Dorsolateral prefrontal cortex (tissue), 120 donors: ENCODE measurements at regions of chr3 and their contacts with region 1.

Region 1: GRCh38 chr3:112814266-112814665 is 32.4 kb downstream of the CD200R1L start:
- DNase-seq: no peak
- H3K4me3 ChIP-seq: no peak overlapping the region
- H3K27ac ChIP-seq: no peak overlapping the region
- H3K27me3 ChIP-seq: peaks cover 0 to 6% (median 0%) of the 10 kb centered on the region in 45 donors
- CTCF ChIP-seq: peak in 43 of 56 donors; percentile 13 to 64 (median 32)

Region 2: DNA sequence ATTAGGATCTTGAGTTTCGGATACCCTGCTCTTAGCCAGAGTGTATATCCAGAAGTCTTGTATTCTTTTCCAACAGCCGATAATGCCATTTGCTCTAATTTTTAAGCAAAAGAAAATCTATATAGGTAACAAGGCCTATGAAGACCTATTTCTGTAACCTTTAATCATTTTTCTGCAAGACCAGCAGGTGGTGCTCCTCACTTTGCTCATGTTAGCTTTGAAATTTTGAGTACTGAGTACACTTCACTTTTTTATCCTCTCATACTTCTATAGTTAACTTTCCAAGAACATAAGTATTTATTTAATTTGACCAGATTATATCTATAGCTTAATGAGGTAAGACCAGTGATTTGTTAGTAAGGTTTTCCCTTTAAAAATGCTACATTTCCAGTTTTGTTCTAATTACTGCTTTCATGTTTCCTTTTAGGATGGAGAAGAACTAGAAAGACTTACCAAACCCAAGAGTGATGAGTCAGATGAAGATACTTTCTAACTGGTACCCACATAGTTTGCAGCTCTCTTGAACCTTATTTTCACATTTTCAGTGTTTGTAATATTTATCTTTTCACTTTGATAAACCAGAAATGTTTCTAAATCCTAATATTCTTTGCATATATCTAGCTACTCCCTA is 231.9 kb before region 1 on chr3:
- intact Hi-C with region 1: loop called in 1 of 2 experiments (anchors 5 kb)
- DNase-seq: no peak
- H3K4me3 ChIP-seq: no peak overlapping the region
- H3K27ac ChIP-seq: no peak overlapping the region
- H3K27me3 ChIP-seq: no peaks in the 10 kb centered on the region
- CTCF ChIP-seq: peak; percentile 20 to 75 (median 57)

Region 3: GRCh38 chr3:112642912-112643506 is 171.3 kb before region 1 on chr3:
- intact Hi-C with region 1: loop called in 1 of 2 experiments (anchors 10 kb)
- DNase-seq: peak; percentile 37 to 83 (median 78)
- H3K4me3 ChIP-seq: peak overlapping the region in 52 of 59 donors; percentile 3 to 57 (median 38)
- H3K27ac ChIP-seq: no peak overlapping the region
- H3K27me3 ChIP-seq: peaks cover 0 to 24% (median 0%) of the 10 kb centered on the region in 45 donors
- CTCF ChIP-seq: peak; percentile 30 to 88 (median 72)

Region 4: DNA sequence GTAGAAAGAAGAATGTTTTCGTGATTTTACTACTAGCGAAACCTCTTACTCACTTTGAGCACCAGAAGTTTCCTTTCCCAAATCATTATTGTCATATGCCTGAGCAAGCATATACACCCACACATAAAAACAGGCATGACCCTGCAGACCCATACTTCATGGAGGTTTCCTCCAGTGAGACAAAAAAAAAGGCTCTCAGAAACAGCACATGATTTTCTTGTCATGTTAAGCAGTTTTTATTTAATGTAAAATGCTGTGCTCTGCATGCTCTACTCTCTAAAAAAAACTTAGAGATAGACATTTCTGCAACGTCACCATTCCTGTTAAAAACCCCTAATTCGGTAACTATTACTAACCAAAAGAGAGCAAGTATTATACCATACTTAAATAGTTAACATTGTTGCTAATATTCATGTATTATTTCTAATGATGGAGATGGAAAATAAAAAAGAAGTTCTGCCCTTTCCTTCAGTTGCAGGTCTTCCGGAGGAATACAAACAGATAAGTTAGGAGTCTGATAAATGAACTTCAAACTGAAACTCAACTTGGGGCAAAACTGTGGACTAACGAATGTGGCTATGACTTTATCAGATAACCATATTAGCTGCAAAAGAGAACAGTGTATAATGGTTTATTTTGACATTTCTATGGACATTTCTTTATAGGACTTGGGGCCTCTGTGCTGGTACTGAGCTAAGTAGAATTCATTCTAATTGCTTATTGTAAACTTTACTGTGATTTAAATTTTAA is 144.7 kb after region 1 on chr3:
- intact Hi-C with region 1: no loop called
- DNase-seq: no peak
- H3K4me3 ChIP-seq: no peak overlapping the region
- H3K27ac ChIP-seq: no peak overlapping the region
- H3K27me3 ChIP-seq: peaks cover 0 to 5% (median 0%) of the 10 kb centered on the region in 45 donors
- CTCF ChIP-seq: no peak